CD8-positive, alpha-beta memory T cell (primary cell): ENCODE measurements at regions of chr12 and their contacts with region 1.

Region 1: DNA sequence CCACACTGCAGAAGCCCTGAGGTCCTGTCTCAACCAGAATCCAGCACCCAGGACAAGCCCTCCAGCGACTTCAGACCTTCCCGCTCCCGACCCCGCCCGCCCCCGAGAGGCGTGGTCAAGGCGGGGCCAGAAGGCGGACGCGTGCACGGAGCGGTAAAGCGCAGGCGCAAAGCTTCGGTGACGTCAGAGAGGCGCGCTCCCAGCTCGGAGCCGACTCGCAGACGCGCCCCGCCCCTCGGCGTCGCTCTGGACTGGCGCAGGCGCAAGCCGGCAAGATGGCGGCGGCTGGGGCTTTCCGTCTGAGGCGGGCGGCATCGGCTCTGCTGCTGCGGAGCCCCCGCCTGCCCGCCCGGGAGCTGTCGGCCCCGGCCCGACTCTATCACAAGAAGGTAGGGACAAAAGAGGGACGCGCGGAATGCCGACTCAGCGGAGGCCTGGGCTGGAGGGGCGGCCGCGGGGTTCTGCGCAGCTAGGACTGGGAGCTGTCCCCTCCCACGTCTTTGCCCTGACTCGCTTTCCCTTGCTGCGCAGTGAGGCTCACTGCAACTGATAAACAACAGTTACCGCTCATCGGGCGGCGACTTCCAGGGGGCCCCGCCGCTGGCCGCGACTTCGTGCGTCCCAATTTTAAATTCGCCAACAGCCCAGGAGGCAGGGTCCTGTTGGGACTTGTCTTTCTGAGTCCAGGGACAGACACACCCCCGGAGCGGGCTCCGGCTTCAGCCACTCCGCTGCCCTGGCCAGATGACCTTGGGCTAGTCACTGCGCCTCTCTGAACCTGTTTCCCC is at the start of gene ISCU:
- DNase-seq: peak; percentile 98 to 100 (median 99)
- H3K4me3 ChIP-seq: peak within 1 kb of the TSS; percentile 96
- H3K4me3 Mint-ChIP-seq: peak within 1 kb of the TSS; percentile 98 to 100 (median 100)
- H3K27ac ChIP-seq: peak within 1 kb of the TSS; percentile 93
- H3K27ac Mint-ChIP-seq: peak within 1 kb of the TSS; percentile 97 to 100 (median 100)
- H3K4me1 ChIP-seq: peaks cover 59% of the 10 kb centered on the region
- H3K4me1 Mint-ChIP-seq: peaks cover 50 to 83% (median 76%) of the 10 kb centered on the region in 3 donors
- H3K27me3 ChIP-seq: no peaks in the 10 kb centered on the region
- H3K27me3 Mint-ChIP-seq: no peaks in the 10 kb centered on the region
- total RNA-seq, gene ISCU: 113 to 116 TPM

Region 2: GRCh38 chr12:108548954-108549521 is 13.5 kb before region 1 on chr12:
- CTCF ChIA-PET with region 1: no interaction called
- POLR2A ChIA-PET with region 1: interaction called, 10 read pairs
- DNase-seq: no peak
- H3K4me3 ChIP-seq: no peak overlapping the region
- H3K4me3 Mint-ChIP-seq: no peak overlapping the region
- H3K27ac ChIP-seq: no peak overlapping the region
- H3K27ac Mint-ChIP-seq: peak overlapping the region in 3 of 8 donors; percentile 10 to 62 (median 29)
- H3K4me1 ChIP-seq: peaks cover 28% of the 10 kb centered on the region
- H3K4me1 Mint-ChIP-seq: peaks cover 51 to 56% (median 56%) of the 10 kb centered on the region in 3 donors
- H3K27me3 ChIP-seq: no peaks in the 10 kb centered on the region
- H3K27me3 Mint-ChIP-seq: peaks cover 0 to 2% of the 10 kb centered on the region in 2 donors

Region 3: GRCh38 chr12:108803428-108804105 is 241.0 kb after region 1 on chr12:
- CTCF ChIA-PET with region 1: interaction called, 24 read pairs
- POLR2A ChIA-PET with region 1: interaction called, 4 read pairs
- DNase-seq: peak; percentile 50 to 78 (median 65)
- H3K4me3 ChIP-seq: no peak overlapping the region
- H3K4me3 Mint-ChIP-seq: no peak overlapping the region
- H3K27ac ChIP-seq: no peak overlapping the region
- H3K27ac Mint-ChIP-seq: peak overlapping the region in 3 of 8 donors; percentile 33 to 63 (median 50)
- H3K4me1 ChIP-seq: peaks cover 5% of the 10 kb centered on the region
- H3K4me1 Mint-ChIP-seq: peaks cover 4 to 8% (median 5%) of the 10 kb centered on the region in 3 donors
- H3K27me3 ChIP-seq: no peaks in the 10 kb centered on the region
- H3K27me3 Mint-ChIP-seq: no peaks in the 10 kb centered on the region